Left colon (tissue), 2 donors: ENCODE measurements at regions of chr2 and their contacts with region 1.

Region 1: DNA sequence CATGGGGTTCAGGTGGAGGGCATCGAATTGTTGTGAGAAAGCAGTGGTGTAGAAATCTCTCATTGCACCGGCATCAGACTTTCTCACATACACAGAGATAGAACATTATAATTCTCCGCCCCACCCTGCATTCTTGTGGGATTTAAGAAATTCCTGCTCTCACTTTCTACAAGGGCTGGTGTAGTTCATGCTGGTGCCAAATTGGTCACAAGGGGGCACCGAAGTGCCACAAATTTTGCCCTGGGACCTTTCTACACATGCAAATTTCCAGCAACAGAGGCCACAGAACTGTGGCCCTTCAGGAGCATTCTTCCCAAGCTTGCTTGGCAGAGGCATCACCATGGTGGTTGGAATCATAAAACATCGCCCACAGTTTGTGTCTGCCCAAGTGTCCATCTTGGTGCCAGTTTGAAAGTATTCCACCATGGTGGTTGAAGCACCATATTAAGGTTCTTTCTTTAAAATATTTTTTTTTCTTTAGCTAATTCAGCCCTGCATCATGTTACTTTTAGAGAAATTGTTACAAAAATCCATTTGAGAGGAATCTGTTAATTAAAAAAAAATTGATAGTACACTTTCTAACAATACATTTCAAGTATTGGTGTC is 521.2 kb upstream of the FANCL start:
- DNase-seq: peak in 1 of 2 donors; percentile 36
- ATAC-seq: peak; percentile 66

Region 2: DNA sequence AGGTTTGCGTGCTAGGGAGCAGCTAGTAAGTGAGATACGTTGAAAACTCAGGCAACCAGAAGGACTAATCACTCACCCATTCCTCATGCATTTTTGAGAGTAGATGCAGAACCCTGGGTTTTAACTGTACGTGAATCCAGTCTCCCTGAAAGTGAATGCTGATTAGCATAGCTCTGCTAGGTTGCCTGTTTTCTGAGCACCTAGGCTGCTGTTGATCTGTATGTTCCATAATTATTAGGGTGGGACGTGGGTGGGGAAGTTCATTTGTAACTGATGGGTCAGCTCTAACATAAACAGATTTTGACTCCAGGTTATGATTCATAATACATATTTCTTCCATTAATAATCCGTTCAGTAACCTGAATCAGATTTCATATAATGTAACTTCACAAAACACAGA is 142.2 kb before region 1 on chr2:
- intact Hi-C with region 1: no loop called
- DNase-seq: no peak
- ATAC-seq: no peak

Region 3: GRCh38 chr2:58645017-58645416 is 117.3 kb before region 1 on chr2:
- intact Hi-C with region 1: no loop called
- DNase-seq: peak in 1 of 2 donors; percentile 3
- ATAC-seq: peak; percentile 63

Region 4: DNA sequence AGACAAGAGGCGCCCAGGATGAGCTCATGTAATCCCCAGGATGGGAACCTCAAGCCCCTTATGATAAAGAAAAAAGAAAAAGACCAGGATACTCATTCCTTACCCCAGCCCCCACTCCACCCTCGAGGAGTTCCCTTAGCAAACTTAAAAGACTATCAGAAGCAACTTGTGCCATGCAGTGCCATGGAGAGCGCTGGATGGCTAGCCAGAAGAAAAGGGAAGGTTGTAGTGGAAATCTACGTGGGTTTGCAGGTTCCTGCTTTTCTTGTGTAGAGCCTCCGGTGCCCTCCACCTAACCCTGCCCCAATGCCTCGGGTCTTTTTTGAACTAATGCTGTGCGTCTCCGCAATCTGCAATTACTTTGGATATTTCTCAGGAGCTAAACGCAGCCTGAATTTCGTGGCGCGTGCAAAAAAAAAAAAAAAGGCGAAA is 1807.4 kb after region 1 on chr2:
- intact Hi-C with region 1: loop called in 1 of 2 experiments (anchors 10 kb)
- DNase-seq: no peak
- ATAC-seq: no peak